ENCODE measurements at regions of chr14 and their contacts with region 1.

Region 1: DNA sequence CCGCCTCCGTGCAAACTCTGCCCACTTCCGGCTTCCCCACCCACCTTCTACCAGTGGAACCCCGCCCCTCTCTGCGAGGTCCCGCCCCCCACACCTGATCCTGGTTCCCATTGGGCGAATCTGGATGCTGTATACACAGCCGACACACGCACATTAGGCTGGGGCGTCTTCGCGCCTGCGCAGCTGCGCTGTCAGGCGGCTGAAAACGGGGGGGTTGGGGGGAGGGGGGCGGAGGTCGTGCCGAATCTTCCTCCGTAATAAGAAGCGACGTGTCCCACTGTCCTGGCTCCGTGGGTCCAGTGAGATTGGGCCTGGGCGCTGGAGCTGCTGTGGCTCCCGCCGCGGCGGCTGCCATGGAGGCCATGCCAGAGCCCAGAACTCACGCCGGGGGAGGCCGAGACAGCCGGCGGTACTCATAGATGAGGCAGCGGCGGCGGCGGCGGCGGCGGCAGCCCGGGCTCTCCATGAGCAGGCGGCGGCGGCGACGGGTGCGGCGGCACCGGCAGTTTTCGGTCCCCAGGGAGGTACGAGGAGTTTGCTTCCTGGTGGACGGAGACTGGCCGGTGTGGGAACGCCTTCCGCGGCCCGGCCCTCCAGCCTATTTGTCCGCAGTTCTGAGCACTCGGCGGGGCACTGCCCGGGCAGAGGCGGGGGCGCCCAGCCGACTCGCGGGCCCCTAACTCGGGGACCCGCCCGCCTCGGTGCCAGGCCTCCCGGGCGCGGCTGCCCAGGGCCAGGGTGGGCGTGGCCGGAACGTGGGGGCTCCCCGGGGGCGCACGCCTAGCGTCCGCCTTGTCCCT is 64.5 kb downstream of the KLHL28 start:
- DNase-seq: peak; percentile 98 to 99
- H3K4me3 ChIP-seq: peak overlapping the region; percentile 52 to 72
- H3K27ac ChIP-seq: peak overlapping the region; percentile 97 to 99
- H3K4me1 ChIP-seq: no peaks in the 10 kb centered on the region
- H3K27me3 ChIP-seq: no peaks in the 10 kb centered on the region
- CTCF ChIP-seq: peak in 1 of 4 experiments; percentile 6
- POLR2A ChIP-seq: peak; percentile 57 to 75

Region 2: DNA sequence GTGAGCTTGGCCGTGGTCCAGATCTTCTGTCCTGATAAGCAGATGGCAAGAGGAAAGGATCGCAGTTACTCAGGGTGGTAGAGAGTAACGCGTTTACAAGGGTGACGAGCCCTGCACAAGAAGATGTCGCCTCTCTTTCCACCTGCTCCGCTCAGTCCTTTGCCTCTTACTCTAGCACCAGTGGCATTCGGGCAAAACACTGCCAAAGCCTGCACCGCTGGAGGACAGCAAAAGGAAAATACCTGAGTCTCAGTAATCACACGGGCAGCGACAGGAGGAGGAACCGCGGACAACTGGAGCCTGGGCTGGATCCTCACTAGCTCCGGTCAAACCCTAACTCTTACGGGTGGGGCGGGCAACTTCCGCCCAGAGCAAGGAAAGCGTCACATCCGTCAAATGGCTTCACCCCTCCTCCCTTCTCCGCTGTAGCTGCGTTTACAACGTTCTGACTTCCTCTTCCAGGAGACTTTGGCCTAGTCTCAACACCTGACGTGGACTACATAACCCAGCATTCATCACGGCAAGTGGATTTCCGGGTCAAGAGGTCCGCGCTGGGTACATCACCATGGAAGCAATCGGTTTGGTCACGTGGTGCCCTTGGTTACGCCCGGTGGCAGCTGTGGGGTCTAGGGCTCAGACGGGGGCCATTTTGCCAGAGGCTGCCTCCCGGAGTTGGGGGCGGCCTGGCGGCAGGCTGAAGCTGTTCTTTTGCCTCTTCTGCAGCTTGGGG is 64.5 kb after region 1 on chr14 and contains the starts of genes KLHL28 and TOGARAM1:
- intact Hi-C with region 1: loop called (anchors 10 kb)
- DNase-seq: peak; percentile 97 to 99
- H3K4me3 ChIP-seq: peak within 1 kb of the TSS; percentile 66 to 75
- H3K27ac ChIP-seq: peak within 1 kb of the TSS; percentile 86 to 91
- H3K4me1 ChIP-seq: peaks cover 3 to 10% of the 10 kb centered on the region in 2 donors
- H3K27me3 ChIP-seq: no peaks in the 10 kb centered on the region
- CTCF ChIP-seq: no peak
- POLR2A ChIP-seq: peak; percentile 69 to 77
- total RNA-seq, gene KLHL28: 3.6 to 40.2 (median 16.0) TPM
- total RNA-seq, gene TOGARAM1: 10.9 to 56.5 (median 31.7) TPM

Region 3: GRCh38 chr14:45308745-45309397 is 411.6 kb after region 1 on chr14:
- intact Hi-C with region 1: no loop called
- DNase-seq: no peak
- H3K4me3 ChIP-seq: no peak overlapping the region
- H3K27ac ChIP-seq: no peak overlapping the region
- H3K4me1 ChIP-seq: no peaks in the 10 kb centered on the region
- H3K27me3 ChIP-seq: no peaks in the 10 kb centered on the region
- CTCF ChIP-seq: no peak
- POLR2A ChIP-seq: no peak